ENCODE measurements at regions of chr22 and their contacts with region 1.

Region 1: DNA sequence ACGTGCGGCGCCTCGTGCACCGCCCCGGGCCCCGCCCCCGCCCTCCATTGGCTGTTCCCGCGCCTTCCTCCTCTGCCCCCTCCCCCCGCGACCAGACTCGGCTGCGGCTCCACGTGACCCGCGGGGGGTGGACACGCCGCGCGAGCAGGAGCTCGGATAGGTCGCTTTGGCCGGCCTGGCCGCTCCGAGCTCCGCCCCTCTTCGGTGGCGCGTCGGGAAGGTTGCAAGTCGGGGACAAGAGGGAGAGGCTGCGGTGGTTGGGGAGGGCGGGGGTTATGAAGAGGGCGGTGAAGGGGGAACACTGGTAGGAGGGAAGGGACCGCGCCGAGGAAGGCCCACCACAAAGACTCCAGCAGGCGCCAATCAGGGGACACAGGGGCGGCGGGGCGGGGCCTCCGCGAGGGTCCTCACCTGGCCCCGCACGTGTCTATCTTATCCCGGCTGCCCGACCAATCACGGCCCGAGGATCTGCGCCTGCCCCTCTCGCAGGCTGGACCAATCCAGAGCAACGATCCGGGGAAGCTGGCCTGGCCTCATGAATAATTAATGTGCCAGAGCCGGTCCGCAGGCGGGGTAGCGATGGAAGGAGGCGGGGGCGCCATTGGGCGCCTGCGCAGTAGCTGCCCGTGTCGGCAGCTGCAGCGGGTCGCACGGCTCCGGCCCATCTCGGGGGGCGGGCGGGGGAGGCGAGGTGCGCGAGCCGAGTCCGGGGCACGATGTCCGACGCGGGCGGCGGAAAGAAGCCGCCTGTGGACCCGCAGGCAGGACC is at the start of gene TEF:
- DNase-seq: peak; percentile 99

Region 2: DNA sequence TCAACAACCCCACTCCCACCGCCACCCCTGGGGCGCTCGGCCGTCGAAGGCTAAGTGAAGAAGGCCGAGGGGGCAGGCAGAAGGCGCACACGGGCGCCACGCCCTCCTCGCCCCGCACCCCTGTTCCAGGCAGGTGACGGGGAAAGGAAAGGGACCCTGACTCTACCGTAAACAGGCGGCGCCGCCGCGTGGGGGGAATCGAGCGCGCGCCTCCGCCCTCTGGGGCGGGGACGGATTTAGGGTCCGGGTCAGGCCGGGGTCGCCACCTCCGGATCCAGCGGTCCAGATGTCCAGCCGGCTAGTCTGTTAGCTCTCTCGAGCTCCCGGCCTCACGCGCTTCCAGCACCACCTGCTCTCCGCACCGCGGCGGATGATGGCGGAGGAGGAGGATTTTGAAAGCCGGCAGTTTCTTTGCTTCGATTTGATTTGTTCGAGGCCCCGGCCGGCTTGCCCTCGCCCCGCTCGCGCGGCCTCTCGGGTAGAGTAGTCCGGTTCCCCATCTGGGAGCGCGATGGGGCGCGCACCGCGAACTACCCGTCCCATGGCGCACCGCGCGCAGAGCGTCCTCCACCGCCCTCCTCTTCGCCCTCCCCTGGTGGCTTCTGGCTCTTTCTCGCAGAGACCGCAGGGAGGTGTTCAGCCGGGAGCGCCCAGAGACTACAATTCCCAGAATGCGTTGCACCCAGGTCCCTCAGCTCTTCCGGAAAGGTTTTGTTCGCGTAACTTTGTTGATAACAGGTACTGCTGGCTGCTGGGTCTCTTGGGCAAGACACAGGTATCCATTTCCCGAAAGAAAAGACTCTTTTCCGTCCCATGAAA is 95.5 kb before region 1 on chr22 and contains the start of gene RANGAP1:
- CTCF ChIA-PET with region 1: interaction called, 3 read pairs
- POLR2A ChIA-PET with region 1: interaction called, 34 read pairs
- DNase-seq: peak; percentile 96

Region 3: DNA sequence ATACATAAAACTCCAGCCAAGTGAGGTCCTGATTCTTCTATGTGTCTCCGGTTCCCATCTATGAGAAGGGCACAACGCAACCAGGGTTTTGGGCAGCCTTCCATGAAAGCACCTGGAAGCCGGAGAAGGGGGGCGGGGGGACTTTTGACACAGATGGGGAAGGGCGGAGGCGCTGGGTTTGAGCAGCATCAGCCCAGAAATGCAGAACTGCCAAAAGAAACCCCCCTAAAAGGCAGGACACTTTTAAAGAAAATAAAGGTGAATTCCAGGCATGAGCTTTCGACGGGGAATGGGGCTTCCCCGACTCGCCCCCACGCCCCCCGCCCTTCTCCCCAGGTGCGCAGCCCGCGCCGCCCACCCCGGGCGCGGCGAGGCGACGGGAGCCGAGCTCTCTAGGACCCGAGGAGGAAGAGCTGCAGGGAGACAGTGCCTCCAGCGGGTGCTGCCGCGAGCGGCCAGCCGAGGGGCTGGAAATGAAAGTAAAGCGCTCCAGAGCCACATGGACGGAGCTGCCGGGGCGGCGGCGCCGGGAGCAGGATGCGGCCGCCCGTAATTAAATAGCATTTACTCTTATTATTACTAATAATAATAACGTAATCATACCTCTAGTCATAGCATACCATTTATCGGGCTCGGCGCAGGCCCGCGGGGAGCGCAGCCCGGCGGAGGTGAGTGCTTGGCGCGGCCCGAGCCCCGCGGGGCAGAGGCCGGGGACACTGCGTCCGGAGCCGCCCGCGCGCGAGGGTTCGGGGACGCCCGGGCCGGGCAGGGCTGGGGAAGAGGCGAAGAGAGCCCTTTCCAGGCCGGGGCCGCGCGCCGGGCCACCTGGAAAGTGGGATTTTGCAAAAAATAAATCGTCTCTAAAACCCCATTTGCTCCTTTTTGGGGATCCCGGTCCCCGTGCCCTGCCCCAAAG is 80.2 kb before region 1 on chr22 and contains the start of gene ZC3H7B:
- CTCF ChIA-PET with region 1: no interaction called
- POLR2A ChIA-PET with region 1: interaction called, 19 read pairs
- DNase-seq: peak; percentile 91

Region 4: DNA sequence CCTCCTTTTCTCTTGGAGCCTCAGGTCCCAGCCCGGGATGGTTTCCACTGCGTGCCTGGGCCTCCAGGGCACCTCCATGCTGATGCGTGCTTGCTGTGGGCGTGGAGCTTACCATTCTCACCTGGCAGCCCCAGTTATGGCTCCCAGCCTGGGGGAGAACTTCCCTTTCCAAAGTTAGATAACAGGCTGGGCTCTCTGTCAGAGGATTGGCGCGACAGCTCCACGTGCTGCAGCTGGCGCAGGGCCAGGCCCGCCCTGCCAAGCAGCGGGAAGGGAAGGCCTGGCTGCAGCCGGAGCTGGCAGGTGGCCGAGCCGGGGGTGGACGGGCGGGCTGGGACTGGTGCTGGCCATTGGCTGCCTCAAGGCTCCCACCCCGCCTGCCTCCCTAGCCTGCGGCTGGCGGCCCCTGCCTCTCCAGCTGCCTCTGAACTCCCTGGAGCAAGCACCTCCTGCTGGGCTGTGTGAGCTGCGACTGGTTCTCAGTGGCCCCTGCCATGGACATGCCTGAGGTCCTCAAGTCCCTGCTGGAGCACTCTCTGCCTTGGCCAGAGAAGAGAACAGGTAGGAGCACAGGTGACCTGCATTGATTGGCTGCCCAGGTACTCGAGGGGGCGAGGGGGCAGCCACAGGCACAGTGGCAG is 14.4 kb before region 1 on chr22:
- CTCF ChIA-PET with region 1: interaction called, 4 read pairs
- POLR2A ChIA-PET with region 1: interaction called, 37 read pairs
- DNase-seq: peak; percentile 83

Region 5: DNA sequence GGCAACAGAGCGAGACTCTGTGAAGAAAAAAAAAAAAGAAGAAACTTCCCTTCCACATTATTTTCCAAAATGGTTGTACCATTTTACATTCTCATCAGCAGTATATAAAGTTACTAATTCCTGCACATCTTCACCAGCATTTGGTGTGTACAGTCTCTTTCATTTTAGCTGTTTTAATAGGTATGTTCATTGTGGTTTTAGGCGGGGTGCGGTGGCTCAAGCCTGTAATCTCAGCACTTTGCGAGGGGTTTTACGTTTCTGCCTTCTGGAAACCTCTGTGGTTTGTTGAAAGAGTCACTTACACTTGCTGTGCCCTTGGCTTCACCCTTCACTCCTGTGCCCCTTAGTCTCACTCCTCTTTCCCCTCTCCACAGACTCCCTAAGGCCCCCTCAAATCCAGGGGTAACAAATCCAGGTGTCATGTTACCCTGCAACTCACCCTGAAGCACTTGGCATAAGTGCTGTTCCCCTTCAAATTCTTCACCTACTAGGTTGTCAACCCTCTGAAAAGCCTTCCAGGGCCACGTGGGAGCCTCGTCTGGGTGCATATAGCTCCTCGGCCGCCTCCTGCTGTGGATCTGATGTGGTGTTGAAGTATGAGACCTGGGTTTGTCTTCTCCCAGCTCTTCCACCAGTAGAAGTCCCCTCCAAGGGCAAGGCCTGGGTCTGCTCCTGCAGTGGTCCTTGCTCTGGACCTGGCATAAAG is 44.3 kb after region 1 on chr22:
- CTCF ChIA-PET with region 1: no interaction called
- POLR2A ChIA-PET with region 1: no interaction called
- DNase-seq: no peak